Aorta (tissue), 5 donors: ENCODE measurements at regions of chr17 and their contacts with region 1.

Region 1: DNA sequence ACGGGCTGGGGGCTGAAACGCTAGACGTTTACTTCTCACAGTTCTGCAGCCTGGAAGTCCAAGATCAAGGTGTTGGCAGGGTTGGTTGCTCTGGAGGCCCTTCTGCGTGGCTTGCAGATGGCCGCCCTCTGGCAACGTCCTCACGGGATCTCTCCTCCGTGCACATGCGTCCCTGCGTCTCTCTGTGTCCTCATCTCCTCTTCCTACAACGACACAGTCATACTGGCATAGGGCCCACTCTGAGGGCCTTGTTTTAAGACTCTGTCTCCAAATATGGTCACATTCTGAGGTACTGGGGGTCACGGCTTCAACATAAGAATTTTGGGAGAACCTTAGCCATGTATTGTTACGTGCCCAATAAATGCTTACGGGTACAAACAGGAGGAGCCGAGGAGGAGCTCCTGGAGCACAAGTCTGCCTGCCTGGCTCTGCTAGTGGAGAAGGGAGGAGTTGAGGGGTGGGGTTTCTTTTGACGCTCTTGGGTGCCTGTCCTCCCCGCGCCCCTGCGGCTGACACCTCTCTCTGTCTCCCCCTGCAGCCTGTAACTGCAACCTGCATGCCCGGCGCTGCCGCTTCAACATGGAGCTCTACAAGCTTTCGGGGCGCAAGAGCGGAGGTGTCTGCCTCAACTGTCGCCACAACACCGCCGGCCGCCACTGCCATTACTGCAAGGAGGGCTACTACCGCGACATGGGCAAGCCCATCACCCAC is 141.1 kb downstream of the NTN1 start:
- DNase-seq: peak; percentile 87 to 89
- ATAC-seq: peak; percentile 82
- H3K4me3 ChIP-seq: peak overlapping the region in 1 of 2 donors; percentile 23
- H3K27ac ChIP-seq: peak overlapping the region; percentile 94 to 97
- H3K4me1 ChIP-seq: peaks cover 0 to 7% of the 10 kb centered on the region in 2 donors
- H3K27me3 ChIP-seq: no peaks in the 10 kb centered on the region

Region 2: DNA sequence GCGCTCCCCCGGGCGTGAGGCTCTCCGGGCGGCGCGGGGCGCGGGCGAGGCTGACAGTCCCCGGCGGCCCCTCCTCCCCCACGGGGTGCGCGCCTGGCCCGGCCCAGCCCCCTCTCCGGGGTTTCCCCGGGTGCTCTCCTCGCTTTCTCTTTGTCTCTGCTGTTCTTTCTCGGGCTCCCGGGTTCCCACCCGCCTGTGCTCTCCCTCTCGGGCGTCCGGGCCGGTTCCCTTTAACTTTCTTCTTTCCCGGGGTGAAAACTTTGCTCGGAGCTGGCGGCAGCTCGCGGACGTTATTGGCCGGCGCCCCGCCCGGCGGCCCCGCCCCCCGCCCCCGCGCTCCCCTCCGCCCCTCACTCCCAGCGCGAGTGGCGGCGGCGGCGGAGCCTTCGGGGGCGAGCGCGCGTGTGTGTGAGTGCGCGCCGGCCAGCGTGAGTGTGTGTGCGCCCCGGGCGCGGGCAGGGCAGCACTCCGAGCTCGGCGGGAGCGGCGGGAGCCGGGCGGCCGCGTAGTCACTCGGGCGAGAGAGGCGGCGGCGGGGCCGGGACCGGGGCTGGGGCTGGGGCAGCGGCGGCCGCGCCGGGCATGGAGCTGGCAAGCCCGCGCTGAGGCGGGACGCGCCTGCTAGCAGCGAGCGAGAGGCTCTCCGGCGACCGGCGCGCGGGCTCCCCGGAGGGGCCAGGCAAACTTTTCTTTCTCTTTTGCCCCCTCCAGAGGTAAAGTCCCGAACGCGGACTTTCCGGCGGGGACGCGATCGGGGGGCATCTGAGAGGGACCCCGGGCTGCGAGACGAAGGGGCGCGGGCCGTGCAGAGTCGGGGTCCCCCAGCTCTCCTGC is 141.1 kb before region 1 on chr17 and contains the start of gene NTN1:
- intact Hi-C with region 1: loop called (anchors 10 kb)
- DNase-seq: peak; percentile 66 to 89
- ATAC-seq: peak; percentile 85
- H3K4me3 ChIP-seq: peak within 1 kb of the TSS; percentile 62 to 95
- H3K27ac ChIP-seq: peak within 1 kb of the TSS; percentile 19 to 31
- H3K4me1 ChIP-seq: no peaks in the 10 kb centered on the region
- H3K27me3 ChIP-seq: no peaks in the 10 kb centered on the region
- total RNA-seq, gene NTN1: 56.5 to 90.4 TPM

Region 3: DNA sequence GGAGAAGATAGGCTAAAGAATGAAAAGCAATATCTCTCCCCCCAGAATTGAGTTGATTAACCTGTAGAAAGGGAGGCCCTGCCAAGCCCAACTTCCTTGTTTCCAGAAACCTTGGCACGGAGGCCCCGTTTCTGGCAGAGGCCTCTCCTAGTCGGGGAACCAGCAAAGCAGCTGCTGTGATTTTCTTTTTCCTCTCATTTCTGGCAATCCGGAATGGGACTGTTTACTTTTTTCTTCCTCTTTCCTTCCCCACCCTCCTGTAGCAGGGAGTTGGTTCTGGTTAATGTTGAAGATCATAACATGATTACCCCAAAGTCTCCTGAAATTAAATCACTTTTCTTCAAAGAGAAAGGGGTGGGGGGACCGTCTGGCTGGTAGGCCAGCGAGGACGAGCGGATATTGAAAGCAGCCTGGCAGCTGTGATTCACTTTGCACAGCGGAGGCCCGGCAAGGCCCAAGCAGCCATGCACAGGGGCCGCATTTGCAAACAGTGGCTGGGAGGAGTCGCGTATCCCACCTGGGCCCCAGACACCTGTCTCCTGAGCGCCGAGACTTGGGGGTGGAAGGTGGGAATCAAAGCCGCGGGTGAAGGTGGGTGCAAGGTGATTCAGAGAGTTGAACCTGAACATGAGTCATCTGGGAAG is 89.6 kb before region 1 on chr17:
- intact Hi-C with region 1: no loop called
- DNase-seq: peak; percentile 86 to 87
- ATAC-seq: peak; percentile 64
- H3K4me3 ChIP-seq: no peak overlapping the region
- H3K27ac ChIP-seq: peak overlapping the region; percentile 29 to 83
- H3K4me1 ChIP-seq: peaks cover 5 to 6% of the 10 kb centered on the region in 2 donors
- H3K27me3 ChIP-seq: no peaks in the 10 kb centered on the region

Region 4: GRCh38 chr17:9228408-9229151 is 66.2 kb after region 1 on chr17:
- intact Hi-C with region 1: loop called in 1 of 2 experiments (anchors 5 kb)
- DNase-seq: peak in 1 of 2 donors; percentile 54
- ATAC-seq: peak; percentile 67
- H3K4me3 ChIP-seq: no peak overlapping the region
- H3K27ac ChIP-seq: peak overlapping the region; percentile 77 to 80
- H3K4me1 ChIP-seq: peaks cover 0 to 2% of the 10 kb centered on the region in 2 donors
- H3K27me3 ChIP-seq: no peaks in the 10 kb centered on the region

Region 5: DNA sequence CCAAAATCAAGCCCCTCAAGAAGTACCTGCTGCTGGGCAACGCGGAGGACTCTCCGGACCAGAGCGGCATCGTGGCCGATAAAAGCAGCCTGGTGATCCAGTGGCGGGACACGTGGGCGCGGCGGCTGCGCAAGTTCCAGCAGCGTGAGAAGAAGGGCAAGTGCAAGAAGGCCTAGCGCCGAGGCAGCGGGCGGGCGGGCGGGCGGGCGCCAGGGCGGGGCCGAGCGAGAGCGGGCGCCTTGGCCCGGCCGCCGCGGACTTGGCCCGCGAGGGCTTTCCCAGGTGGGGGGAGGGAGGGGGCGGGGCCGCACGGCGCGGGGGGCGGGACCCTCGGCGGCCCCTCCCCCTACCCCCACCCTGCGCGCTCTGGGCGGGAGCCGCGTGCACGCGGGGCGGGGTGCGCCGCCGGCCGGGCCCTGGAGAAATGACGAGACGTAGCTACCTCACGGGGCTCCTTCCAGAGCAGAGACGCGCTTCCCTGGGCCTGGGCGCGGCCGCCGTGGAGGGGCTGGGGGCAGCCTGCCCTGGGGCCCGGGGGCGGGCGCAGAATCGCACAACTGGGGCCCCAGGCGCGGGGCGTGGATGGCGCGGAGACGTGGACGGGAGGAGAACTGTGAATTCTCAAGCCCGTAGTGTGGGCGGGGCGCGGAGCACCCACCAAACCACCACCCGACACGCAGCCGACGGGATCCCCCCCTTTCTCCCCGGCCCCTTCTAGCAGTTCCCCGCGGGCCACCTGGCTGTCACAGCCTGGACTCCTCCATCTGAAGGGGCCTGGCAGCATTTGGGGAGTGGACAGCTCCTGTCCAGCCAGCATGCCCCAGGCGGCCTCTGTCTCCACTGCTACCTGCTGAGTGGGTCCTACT is 77.6 kb after region 1 on chr17:
- intact Hi-C with region 1: loop called in 1 of 2 experiments (anchors 5 kb)
- DNase-seq: peak; percentile 88 to 94
- ATAC-seq: peak; percentile 88
- H3K4me3 ChIP-seq: peak overlapping the region; percentile 20 to 54
- H3K27ac ChIP-seq: peak overlapping the region; percentile 99 to 100
- H3K4me1 ChIP-seq: peaks cover 0 to 4% of the 10 kb centered on the region in 2 donors
- H3K27me3 ChIP-seq: no peaks in the 10 kb centered on the region